Posterior cingulate gyrus (tissue), 11 donors: ENCODE measurements at regions of chrX and their contacts with region 1.

Region 1: DNA sequence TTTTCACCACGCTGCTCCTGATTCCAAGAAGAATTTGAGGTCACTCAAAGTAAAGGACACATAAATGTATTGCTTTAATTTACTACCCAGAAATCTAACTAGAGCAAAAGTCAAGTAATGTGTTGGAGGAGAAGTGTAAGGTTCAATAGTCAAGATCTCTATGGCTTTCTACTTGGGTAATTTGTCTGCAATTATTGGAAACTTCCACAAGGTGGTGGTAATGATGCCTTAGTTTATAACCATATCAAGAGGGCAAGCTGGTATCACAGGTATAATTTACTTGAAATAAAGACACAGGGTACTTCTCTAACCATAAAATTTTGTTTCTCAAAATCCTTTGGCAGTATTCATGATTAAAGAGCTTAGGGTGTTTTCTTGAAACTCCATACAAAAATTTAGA is 10.2 kb upstream of the GRIA3 start:
- DNase-seq: no peak

Region 2: GRCh38 chrX:123256378-123256777 is 82.5 kb after region 1 on chrX:
- intact Hi-C with region 1: no loop called
- DNase-seq: no peak

Region 3: GRCh38 chrX:123340682-123341081 is 166.8 kb after region 1 on chrX:
- intact Hi-C with region 1: no loop called
- DNase-seq: no peak

Region 4: DNA sequence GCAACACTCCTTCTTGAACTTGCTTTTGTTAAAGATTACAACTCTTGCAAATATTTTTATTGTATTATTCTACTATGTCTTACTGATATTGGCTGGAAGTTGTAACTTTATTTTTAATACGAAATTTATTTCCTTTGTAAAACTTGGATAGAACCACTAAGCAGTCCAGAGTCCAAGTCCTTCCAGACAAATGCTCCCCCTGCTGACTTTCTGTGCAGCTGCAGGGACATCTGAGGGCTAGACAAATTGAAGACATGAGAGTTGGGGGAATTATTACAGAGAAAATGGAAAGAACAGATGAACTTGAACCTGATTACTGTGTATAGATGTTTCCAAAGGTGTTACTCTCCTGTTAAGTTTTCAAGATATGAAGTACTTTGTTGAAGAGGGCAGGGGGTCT is 249.0 kb after region 1 on chrX:
- intact Hi-C with region 1: loop called (anchors 10 kb)
- DNase-seq: peak in 7 of 10 donors; percentile 8 to 71 (median 18)

Region 5: DNA sequence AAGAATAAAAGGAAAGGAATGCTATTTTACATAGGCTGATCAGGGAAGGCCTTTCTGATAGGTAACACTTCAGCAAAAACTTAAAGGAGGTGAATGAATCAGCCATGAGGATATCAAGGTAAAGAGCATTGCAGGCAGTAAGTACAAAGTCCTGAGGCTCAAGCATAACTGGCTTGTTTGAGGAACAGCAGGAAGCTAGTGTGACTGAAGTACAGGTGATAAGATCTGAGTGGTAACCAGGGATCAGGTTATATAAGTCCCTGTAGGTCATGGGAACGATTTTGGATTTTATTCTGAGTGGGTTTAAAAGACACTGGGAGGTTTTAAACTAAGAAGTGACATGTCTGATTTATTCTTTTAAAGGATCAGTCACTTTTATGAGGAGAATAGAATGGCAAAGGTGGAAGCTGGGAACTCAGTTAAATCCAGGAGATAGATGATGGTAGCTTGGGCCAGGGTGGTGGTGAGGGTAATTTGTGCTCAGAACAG is 606.1 kb after region 1 on chrX:
- intact Hi-C with region 1: no loop called
- DNase-seq: no peak

Region 6: DNA sequence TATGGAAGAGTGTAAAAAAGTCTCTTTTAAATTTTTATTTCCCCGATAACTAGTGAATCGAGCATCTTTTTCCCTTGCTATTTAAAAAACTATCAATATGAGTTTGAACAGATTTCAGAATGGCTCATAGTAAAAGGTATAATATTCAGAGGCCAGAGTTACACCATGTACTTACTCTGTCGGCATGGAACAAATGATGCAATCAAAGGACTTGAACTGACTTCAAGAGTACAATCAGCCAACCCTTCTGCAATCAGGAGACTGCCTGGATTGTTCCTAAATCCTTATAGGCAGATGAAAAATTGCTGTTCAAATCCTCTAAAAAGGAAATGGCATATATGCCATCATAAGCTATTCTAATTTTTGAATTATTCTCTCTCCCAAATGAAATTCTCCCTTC is 1445.9 kb after region 1 on chrX:
- intact Hi-C with region 1: no loop called
- DNase-seq: no peak